GM12878 (cell line): ENCODE measurements at regions of chr12 and their contacts with region 1.

Region 1: DNA sequence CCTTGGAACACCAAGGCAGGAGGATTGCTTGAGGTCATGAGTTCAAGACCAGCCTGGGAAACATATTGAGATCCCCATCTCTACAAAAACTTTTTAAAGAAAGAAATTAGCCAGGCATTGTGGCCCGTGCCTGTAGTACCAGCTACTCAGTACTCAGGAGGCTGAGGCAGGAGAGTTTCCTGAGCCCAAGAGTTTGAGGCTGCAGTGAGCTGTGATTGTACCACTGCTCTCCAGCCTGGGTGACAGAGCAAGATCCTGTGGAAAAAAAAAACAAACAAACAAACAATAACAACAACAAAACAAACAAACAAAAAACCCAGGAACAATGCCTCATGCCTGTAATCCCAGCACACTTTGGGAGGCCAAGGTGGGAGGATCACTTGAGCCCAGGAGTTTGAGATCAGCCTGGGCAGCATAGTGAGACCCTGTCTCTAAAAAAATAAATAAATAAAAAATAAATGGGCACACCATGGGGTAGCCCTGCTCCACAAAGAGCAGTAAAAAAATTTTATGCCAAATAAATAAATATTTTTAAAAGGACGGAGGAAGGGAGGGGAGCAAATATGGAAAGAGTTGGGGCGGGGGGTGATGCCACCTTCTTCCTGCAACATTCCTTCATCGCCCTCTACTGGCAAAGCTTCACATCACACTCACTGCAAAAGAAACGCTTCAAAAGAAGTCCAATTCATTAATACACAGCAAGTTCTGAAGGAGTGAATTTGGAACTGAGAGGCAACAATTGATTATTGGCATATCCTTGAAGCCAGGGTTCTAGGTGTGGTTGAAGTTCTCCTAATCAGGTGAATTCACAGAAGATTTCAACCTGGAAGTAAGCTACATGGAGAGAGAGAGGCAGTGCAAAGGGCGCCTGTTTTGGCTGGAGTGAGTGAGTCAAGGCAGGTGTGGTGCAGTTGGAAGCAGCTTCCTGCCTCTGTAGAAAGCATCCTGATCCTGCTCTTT is 8.8 kb upstream of the GNPTAB start:
- DNase-seq: no peak
- ATAC-seq: peak; percentile 84
- H3K4me3 ChIP-seq: no peak overlapping the region
- H3K27ac ChIP-seq: peak overlapping the region; percentile 54
- H3K4me1 ChIP-seq: peaks cover 15% of the 10 kb centered on the region
- H3K27me3 ChIP-seq: no peaks in the 10 kb centered on the region
- CTCF ChIP-seq: peak; percentile 76 to 86 (median 80)
- EP300 ChIP-seq: no peak
- POLR2A ChIP-seq: no peak
- RAD21 ChIP-seq: peak; percentile 78

Region 2: GRCh38 chr12:101414533-101415119 is 425.0 kb before region 1 on chr12:
- CTCF ChIA-PET with region 1: interaction called, 13 read pairs
- POLR2A ChIA-PET with region 1: no interaction called
- RAD21 ChIA-PET with region 1: interaction called, 12 read pairs
- SMC1A ChIA-PET with region 1: interaction called, 9 read pairs
- in situ Hi-C with region 1: loop called (anchors 5 kb)
- intact Hi-C with region 1: loop called (anchors 1 kb)
- DNase-seq: peak; percentile 13
- ATAC-seq: peak; percentile 81
- H3K4me3 ChIP-seq: no peak overlapping the region
- H3K27ac ChIP-seq: no peak overlapping the region
- H3K4me1 ChIP-seq: no peaks in the 10 kb centered on the region
- H3K27me3 ChIP-seq: no peaks in the 10 kb centered on the region
- CTCF ChIP-seq: peak; percentile 48 to 66 (median 51); a peak in 5 of 6 replicates
- EP300 ChIP-seq: no peak
- POLR2A ChIP-seq: no peak
- RAD21 ChIP-seq: peak; percentile 87

Region 3: GRCh38 chr12:101634724-101635123 is 204.9 kb before region 1 on chr12:
- CTCF ChIA-PET with region 1: no interaction called
- POLR2A ChIA-PET with region 1: no interaction called
- RAD21 ChIA-PET with region 1: no interaction called
- SMC1A ChIA-PET with region 1: no interaction called
- in situ Hi-C with region 1: no loop called
- intact Hi-C with region 1: no loop called
- DNase-seq: peak; percentile 89
- ATAC-seq: peak; percentile 99
- H3K4me3 ChIP-seq: no peak overlapping the region
- H3K27ac ChIP-seq: peak overlapping the region; percentile 27
- H3K4me1 ChIP-seq: peaks cover 16% of the 10 kb centered on the region
- H3K27me3 ChIP-seq: no peaks in the 10 kb centered on the region
- CTCF ChIP-seq: no peak
- EP300 ChIP-seq: peak; percentile 75 to 79; a peak in 3 of 4 replicates
- POLR2A ChIP-seq: no peak
- RAD21 ChIP-seq: no peak

Region 4: GRCh38 chr12:101713059-101713682 is 126.4 kb before region 1 on chr12:
- CTCF ChIA-PET with region 1: no interaction called
- POLR2A ChIA-PET with region 1: no interaction called
- RAD21 ChIA-PET with region 1: no interaction called
- SMC1A ChIA-PET with region 1: no interaction called
- in situ Hi-C with region 1: no loop called
- intact Hi-C with region 1: no loop called
- DNase-seq: no peak
- ATAC-seq: no peak
- H3K4me3 ChIP-seq: no peak overlapping the region
- H3K27ac ChIP-seq: no peak overlapping the region
- H3K4me1 ChIP-seq: no peaks in the 10 kb centered on the region
- H3K27me3 ChIP-seq: no peaks in the 10 kb centered on the region
- CTCF ChIP-seq: no peak
- EP300 ChIP-seq: no peak
- POLR2A ChIP-seq: no peak
- RAD21 ChIP-seq: no peak

Region 5: DNA sequence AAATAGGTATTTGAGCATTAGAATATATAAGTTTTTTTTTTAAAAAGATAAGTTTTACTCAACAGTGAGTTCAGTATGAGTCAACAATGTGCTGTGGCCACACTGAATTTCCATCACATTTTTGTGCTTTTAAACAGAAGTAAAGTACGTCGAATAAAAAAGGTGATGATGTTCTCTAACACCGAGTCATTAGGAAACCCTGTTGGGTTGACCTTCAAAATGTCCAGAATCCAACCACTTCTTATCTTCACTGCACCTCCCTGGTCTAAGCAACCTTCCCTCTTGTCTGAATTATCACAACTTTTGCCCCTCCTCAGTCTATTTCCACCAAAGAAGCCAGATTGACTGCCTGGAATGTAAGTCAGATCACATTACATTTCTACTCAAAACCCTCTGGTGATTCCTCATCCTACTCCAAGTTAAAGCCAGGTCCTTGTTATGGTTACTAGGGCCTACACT is 57.3 kb before region 1 on chr12:
- CTCF ChIA-PET with region 1: interaction called, 37 read pairs
- POLR2A ChIA-PET with region 1: interaction called, 5 read pairs
- RAD21 ChIA-PET with region 1: interaction called, 6 read pairs
- SMC1A ChIA-PET with region 1: interaction called, 13 read pairs
- in situ Hi-C with region 1: loop called (anchors 10 kb)
- intact Hi-C with region 1: no loop called
- DNase-seq: no peak
- ATAC-seq: no peak; the same call in 2 of the 3 replicates
- H3K4me3 ChIP-seq: no peak overlapping the region
- H3K27ac ChIP-seq: no peak overlapping the region
- H3K4me1 ChIP-seq: no peaks in the 10 kb centered on the region
- H3K27me3 ChIP-seq: no peaks in the 10 kb centered on the region
- CTCF ChIP-seq: no peak
- EP300 ChIP-seq: no peak
- POLR2A ChIP-seq: no peak
- RAD21 ChIP-seq: no peak

Region 6: GRCh38 chr12:101803978-101804377 is 35.6 kb before region 1 on chr12:
- CTCF ChIA-PET with region 1: interaction called, 10 read pairs
- POLR2A ChIA-PET with region 1: no interaction called
- RAD21 ChIA-PET with region 1: no interaction called
- SMC1A ChIA-PET with region 1: interaction called, 3 read pairs
- in situ Hi-C with region 1: no loop called
- intact Hi-C with region 1: no loop called
- DNase-seq: no peak
- ATAC-seq: no peak
- H3K4me3 ChIP-seq: no peak overlapping the region
- H3K27ac ChIP-seq: no peak overlapping the region
- H3K4me1 ChIP-seq: no peaks in the 10 kb centered on the region
- H3K27me3 ChIP-seq: no peaks in the 10 kb centered on the region
- CTCF ChIP-seq: no peak
- EP300 ChIP-seq: no peak
- POLR2A ChIP-seq: no peak
- RAD21 ChIP-seq: no peak

Region 7: DNA sequence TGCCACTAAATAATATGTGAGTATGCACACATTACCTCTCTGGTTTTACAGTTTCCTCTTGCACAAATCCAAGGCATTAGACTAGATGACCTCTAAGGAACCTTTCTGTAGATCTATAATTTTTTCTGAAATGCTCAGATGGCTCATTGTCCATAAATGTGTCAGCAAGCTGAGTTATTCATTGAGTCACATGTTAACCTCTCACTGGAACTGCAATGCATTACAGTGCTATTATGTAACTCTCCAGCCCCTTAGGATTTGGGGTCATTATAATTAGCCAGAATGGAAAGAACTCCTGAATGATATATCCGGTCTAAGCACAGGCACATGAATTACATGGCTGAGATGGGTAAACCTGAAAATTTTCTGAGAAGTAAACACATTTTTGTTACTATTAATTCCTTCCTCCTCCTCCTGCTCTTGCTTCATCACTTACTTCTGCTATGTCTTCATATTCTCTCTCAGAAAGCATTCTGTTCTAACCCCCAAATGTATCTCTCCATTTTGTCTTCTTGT is 17.5 kb after region 1 on chr12:
- CTCF ChIA-PET with region 1: interaction called, 47 read pairs
- POLR2A ChIA-PET with region 1: interaction called, 8 read pairs
- RAD21 ChIA-PET with region 1: interaction called, 7 read pairs
- SMC1A ChIA-PET with region 1: interaction called, 7 read pairs
- in situ Hi-C with region 1: no loop called
- intact Hi-C with region 1: no loop called
- DNase-seq: no peak
- ATAC-seq: peak; percentile 49
- H3K4me3 ChIP-seq: no peak overlapping the region
- H3K27ac ChIP-seq: peak overlapping the region; percentile 75
- H3K4me1 ChIP-seq: peaks cover 64% of the 10 kb centered on the region
- H3K27me3 ChIP-seq: no peaks in the 10 kb centered on the region
- CTCF ChIP-seq: no peak
- EP300 ChIP-seq: peak; percentile 40 to 64; a peak in 3 of 4 replicates
- POLR2A ChIP-seq: no peak
- RAD21 ChIP-seq: no peak

Region 8: GRCh38 chr12:101885912-101886561 is 46.4 kb after region 1 on chr12:
- CTCF ChIA-PET with region 1: interaction called, 24 read pairs
- POLR2A ChIA-PET with region 1: no interaction called
- RAD21 ChIA-PET with region 1: interaction called, 7 read pairs
- SMC1A ChIA-PET with region 1: interaction called, 6 read pairs
- in situ Hi-C with region 1: no loop called
- intact Hi-C with region 1: no loop called
- DNase-seq: no peak
- ATAC-seq: peak; percentile 68
- H3K4me3 ChIP-seq: 0 out of 2 replicates have a peak overlapping the region, but pooled peaks have one; percentile 32
- H3K27ac ChIP-seq: no peak overlapping the region
- H3K4me1 ChIP-seq: peaks cover 4% of the 10 kb centered on the region; the same call in 1 of the 2 replicates
- H3K27me3 ChIP-seq: no peaks in the 10 kb centered on the region
- CTCF ChIP-seq: no peak
- EP300 ChIP-seq: no peak
- POLR2A ChIP-seq: no peak
- RAD21 ChIP-seq: no peak

Region 9: GRCh38 chr12:101982307-101982706 is 142.7 kb after region 1 on chr12:
- CTCF ChIA-PET with region 1: no interaction called
- POLR2A ChIA-PET with region 1: no interaction called
- RAD21 ChIA-PET with region 1: no interaction called
- SMC1A ChIA-PET with region 1: no interaction called
- in situ Hi-C with region 1: no loop called
- intact Hi-C with region 1: no loop called
- DNase-seq: no peak
- ATAC-seq: no peak
- H3K4me3 ChIP-seq: no peak overlapping the region
- H3K27ac ChIP-seq: no peak overlapping the region
- H3K4me1 ChIP-seq: no peaks in the 10 kb centered on the region
- H3K27me3 ChIP-seq: no peaks in the 10 kb centered on the region
- CTCF ChIP-seq: no peak
- EP300 ChIP-seq: no peak
- POLR2A ChIP-seq: no peak
- RAD21 ChIP-seq: no peak